ENCODE measurements at regions of chr11 and their contacts with region 1.

Region 1: DNA sequence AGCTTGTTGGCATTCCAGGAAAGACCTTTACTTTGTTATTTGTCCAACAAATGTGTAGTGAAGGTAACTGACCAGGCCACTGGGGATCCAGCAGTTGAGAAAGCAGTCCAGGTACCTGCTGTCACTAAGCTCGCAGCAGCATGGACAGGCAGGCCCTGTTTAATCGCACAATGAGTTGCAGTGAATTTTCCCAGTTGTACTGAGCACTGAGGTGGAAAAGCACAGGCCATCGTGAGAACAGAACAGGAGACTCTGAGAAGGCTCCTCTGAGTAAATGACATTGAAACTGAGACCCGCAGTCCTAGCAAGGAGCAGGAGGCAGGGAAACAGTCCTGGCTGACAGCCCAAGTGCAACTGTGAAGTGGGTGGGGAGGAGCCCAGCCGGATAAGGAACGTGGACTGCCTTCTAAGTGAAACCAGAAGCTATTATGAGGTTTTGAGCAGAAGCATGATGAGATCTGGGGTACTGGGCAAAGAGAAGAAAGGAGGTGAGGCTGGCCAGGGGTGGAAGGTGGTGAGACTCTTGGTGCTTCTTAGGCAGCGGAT is 39.8 kb upstream of the CDON start:
- DNase-seq: no peak

Region 2: DNA sequence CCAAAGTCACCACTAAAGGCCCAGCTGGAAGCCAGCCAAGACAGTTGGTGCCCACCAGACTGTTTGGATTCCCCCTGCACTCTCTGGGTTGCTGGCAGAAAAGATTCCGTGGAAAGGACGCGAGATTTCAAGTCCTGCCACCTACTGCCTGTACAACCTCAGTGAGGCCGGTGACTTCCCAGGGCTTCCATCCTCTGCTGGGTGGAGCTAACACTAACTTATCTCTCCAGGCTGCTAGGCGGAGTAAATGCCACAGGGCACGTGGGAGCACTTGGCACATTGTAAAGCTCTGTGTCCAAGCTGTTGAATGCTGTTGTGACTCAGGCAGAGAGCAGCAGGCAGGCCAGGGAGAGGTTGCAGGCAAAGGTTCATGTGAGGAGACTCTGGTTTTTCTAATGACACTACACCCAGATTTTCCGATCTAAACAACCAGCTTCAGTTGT is 11.0 kb after region 1 on chr11:
- CTCF ChIA-PET with region 1: no interaction called
- POLR2A ChIA-PET with region 1: interaction called, 12 read pairs
- DNase-seq: peak; percentile 40